CD4-positive, alpha-beta memory T cell (primary cell): ENCODE measurements at regions of chr15 and their contacts with region 1.

Region 1: GRCh38 chr15:77044228-77045042 is 26.5 kb downstream of the TSPAN3 start:
- DNase-seq: no peak
- H3K4me3 ChIP-seq: no peak overlapping the region
- H3K4me3 Mint-ChIP-seq: no peak overlapping the region
- H3K27ac ChIP-seq: no peak overlapping the region
- H3K27ac Mint-ChIP-seq: peak overlapping the region in 2 of 7 donors; percentile 31 to 37
- H3K4me1 ChIP-seq: no peaks in the 10 kb centered on the region
- H3K4me1 Mint-ChIP-seq: peaks cover 1 to 11% (median 6%) of the 10 kb centered on the region in 4 donors
- H3K27me3 ChIP-seq: no peaks in the 10 kb centered on the region
- H3K27me3 Mint-ChIP-seq: no peaks in the 10 kb centered on the region

Region 2: GRCh38 chr15:76951220-76951619 is 93.2 kb before region 1 on chr15:
- CTCF ChIA-PET with region 1: no interaction called
- POLR2A ChIA-PET with region 1: no interaction called
- intact Hi-C with region 1: no loop called
- DNase-seq: peak in 1 of 5 donors; percentile 6
- H3K4me3 ChIP-seq: no peak overlapping the region
- H3K4me3 Mint-ChIP-seq: no peak overlapping the region
- H3K27ac ChIP-seq: no peak overlapping the region
- H3K27ac Mint-ChIP-seq: peak overlapping the region in 4 of 7 donors; percentile 25 to 57 (median 50)
- H3K4me1 ChIP-seq: no peaks in the 10 kb centered on the region
- H3K4me1 Mint-ChIP-seq: peaks cover 6 to 13% (median 8%) of the 10 kb centered on the region in 4 donors
- H3K27me3 ChIP-seq: no peaks in the 10 kb centered on the region
- H3K27me3 Mint-ChIP-seq: no peaks in the 10 kb centered on the region

Region 3: GRCh38 chr15:77059786-77060361 is 15.4 kb after region 1 on chr15:
- CTCF ChIA-PET with region 1: interaction called, 3 read pairs
- POLR2A ChIA-PET with region 1: interaction called, 14 read pairs
- intact Hi-C with region 1: no loop called
- DNase-seq: no peak
- H3K4me3 ChIP-seq: no peak overlapping the region
- H3K4me3 Mint-ChIP-seq: no peak overlapping the region
- H3K27ac ChIP-seq: no peak overlapping the region
- H3K27ac Mint-ChIP-seq: no peak overlapping the region
- H3K4me1 ChIP-seq: no peaks in the 10 kb centered on the region
- H3K4me1 Mint-ChIP-seq: peaks cover 0 to 8% (median 5%) of the 10 kb centered on the region in 4 donors
- H3K27me3 ChIP-seq: no peaks in the 10 kb centered on the region
- H3K27me3 Mint-ChIP-seq: no peaks in the 10 kb centered on the region